Dendritic cell treated with granulocyte-macrophage colony-stimulating factor and Interleukin-4, amounts not matched to agents 40 ng/mL and 50 ng/mL, for 4 days (primary cell): ENCODE measurements at regions of chr15 and their contacts with region 1.

Region 1: DNA sequence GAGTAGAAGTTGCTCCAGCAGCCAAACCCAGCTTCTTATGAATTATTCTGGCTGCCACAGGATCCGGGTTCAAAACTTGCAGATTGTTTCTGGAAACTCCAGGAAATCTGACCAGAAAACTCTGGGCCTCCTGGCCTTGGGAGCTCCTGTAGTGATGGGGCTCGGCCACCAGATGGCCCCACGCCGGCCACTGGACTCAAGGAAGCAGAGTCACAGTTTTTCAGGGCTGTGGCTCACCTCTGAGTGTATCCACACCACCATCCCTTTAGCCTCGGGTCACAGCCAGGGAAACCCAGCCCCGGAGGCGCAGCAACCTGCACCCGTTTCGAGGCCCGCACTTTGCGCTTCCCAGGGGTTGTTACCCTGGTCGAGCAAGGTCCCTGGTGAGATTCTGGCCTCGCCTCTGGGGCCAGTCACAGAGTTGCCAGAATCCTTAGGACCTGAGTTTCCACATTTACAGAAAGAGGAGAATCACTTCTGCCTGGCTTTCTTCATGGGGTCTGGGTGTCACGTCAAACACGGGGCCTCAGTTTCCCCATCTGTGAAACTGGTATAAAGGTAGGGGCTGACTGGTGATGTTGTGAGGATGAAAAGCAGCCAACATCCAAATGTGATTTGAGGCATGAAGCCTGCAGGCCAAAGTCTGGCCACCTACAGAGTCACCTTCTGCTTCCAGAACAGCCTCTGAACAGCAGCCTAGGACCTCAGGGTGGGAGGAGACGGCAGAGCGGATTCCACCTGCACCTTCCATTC is 53.5 kb upstream of the LCTL start:
- H3K4me3 Mint-ChIP-seq: no peak overlapping the region
- H3K27ac Mint-ChIP-seq: no peak overlapping the region
- H3K4me1 Mint-ChIP-seq: peaks cover 77% of the 10 kb centered on the region
- H3K27me3 Mint-ChIP-seq: peaks cover 22% of the 10 kb centered on the region

Region 2: DNA sequence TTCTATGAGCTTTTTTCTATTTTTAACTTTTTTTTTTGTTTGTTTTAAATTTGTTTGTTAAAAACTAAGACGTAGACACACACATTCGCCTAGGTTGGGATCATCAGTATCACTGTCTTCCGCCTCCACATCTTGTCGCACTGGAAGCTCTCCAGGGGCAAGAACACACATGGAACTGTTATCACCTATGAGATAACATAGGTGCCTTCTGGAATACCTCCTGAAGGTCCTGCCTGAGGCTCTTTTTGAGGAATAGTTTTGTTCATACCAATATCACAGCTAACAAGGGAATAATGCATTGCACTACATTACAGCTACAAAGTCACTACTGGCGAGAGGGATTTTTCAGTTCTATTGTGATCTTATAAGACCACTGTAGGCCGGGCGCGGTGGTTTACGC is 84.3 kb before region 1 on chr15:
- intact Hi-C with region 1: no loop called
- H3K4me3 Mint-ChIP-seq: no peak overlapping the region
- H3K27ac Mint-ChIP-seq: no peak overlapping the region
- H3K4me1 Mint-ChIP-seq: peaks cover 13% of the 10 kb centered on the region
- H3K27me3 Mint-ChIP-seq: no peaks in the 10 kb centered on the region

Region 3: DNA sequence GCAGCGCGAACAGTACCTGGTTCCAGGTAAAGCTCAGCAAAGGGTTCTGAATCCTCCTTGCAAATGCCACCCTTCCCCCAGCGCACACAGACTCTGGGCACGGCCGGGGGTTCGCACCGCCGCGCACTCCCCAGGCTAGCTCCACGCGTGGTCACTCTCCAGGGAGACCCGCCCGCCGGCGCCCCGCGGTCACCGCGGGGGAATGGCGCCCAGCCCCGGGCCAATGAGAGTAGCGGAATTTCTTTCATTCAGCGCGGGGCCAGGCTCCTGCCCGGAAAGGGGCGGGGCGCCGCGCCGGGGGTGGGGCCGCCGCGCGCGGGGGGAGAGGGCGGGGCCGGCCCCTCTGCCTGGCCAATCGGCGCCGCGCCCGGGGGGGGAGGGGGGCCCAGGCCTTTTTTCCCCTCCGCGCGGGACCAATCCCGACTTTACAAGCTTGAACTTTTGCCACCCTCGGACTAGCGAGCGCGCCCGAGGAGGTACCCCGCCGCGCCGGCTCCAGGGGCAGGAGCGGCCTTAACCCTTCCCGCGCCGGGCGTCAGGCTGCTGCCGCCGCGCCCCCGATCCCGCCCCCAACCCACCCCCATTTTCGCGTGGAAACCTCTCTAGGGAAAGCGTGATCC is 81.6 kb after region 1 on chr15:
- intact Hi-C with region 1: loop called (anchors 1 kb)
- H3K4me3 Mint-ChIP-seq: peak overlapping the region; percentile 83
- H3K27ac Mint-ChIP-seq: peak overlapping the region; percentile 86
- H3K4me1 Mint-ChIP-seq: peaks cover 41% of the 10 kb centered on the region
- H3K27me3 Mint-ChIP-seq: peaks cover 31% of the 10 kb centered on the region

Region 4: DNA sequence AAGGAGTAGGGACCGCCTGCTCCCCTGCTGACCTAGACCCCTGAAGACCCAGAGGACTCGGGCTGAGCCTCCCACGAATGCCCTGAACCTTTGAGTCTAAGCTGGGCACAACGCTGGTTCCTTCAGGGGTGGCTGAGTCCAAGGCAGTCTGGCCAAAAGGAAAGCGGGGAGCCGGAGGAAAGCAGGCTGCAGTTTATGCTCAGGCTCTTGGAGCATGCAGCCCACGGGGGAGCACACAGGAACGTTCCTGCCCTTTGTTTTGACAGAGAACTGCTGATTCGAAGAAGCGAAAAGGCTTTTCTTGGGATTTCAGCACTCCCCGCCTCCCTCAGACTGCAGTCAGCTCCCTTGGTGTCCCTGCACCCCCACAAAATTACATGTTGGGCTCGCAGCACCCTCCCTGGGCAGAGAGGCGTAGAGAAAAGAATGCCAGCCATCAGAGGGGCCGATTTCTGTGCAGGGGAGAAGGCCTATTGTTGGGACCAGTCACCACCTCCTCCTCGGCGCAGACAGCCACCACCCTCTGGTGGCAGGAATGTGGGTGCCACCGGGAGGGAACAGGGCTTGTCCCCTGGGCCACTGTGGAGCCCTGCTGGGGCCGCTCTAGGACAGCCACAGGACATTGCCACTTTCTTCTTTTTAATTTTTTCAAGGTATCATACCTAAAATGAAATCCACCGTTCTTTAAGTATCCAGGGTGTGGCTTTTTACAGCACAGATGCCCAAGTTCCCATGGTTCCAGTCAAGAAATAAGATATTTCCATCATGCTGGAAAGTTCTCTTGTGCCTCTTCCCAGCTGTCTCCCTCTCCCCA is 154.9 kb after region 1 on chr15:
- intact Hi-C with region 1: loop called (anchors 1 kb)
- H3K4me3 Mint-ChIP-seq: no peak overlapping the region
- H3K27ac Mint-ChIP-seq: no peak overlapping the region
- H3K4me1 Mint-ChIP-seq: peaks cover 9% of the 10 kb centered on the region
- H3K27me3 Mint-ChIP-seq: no peaks in the 10 kb centered on the region